K562 (cell line): ENCODE measurements at regions of chr11 and their contacts with region 1.

Region 1: DNA sequence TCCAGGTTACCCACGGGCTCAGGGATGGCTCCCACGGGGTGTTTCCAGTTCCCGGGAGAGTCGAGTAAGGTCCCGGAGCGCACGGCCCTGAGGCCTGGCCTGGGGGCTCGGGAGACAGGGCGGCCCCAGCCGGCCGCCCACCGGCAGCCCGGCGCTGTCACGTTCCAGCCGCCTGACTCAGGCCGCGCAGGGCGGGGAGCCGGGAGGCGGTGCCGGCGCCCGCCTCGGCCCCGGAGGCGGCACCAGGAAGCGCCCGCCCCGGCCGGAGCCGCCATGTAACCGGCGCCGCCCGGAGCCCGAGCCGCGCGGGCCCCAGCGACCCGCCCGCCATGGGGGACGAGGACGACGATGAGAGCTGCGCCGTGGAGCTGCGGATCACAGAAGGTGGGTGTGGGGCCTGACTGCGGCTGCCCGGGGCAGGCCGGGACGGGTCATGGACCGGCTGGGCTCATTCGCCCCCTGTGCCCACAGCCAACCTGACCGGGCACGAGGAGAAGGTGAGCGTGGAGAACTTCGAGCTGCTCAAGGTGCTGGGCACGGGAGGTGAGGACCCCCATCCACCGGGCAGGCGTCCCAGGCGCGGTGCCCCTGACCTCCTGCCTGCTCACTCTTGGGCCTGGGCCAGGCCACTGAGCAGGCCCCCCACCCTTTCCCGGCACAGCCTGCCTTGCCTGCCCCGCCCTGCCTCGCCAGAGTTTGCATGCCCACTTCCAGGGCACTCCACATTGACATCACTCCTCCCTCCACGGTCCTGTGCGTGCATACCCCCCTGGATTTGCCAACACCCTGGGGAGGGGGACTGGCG is at the start of gene RPS6KA4:
- DNase-seq: peak; percentile 80 to 92 (median 90)
- ATAC-seq: peak; percentile 85
- H3K4me3 ChIP-seq: peak within 1 kb of the TSS; percentile 81
- H3K27ac ChIP-seq: peak within 1 kb of the TSS; percentile 91
- H3K4me1 ChIP-seq: peaks cover 34 to 62% of the 10 kb centered on the region in 2 experiments
- H3K27me3 ChIP-seq: no peaks in the 10 kb centered on the region
- CTCF ChIP-seq: no peak
- EP300 ChIP-seq: no peak
- POLR2A ChIP-seq: peak; percentile 71
- RAD21 ChIP-seq: no peak
- polyA plus RNA-seq, gene RPS6KA4: 0.15 to 0.27 TPM

Region 2: DNA sequence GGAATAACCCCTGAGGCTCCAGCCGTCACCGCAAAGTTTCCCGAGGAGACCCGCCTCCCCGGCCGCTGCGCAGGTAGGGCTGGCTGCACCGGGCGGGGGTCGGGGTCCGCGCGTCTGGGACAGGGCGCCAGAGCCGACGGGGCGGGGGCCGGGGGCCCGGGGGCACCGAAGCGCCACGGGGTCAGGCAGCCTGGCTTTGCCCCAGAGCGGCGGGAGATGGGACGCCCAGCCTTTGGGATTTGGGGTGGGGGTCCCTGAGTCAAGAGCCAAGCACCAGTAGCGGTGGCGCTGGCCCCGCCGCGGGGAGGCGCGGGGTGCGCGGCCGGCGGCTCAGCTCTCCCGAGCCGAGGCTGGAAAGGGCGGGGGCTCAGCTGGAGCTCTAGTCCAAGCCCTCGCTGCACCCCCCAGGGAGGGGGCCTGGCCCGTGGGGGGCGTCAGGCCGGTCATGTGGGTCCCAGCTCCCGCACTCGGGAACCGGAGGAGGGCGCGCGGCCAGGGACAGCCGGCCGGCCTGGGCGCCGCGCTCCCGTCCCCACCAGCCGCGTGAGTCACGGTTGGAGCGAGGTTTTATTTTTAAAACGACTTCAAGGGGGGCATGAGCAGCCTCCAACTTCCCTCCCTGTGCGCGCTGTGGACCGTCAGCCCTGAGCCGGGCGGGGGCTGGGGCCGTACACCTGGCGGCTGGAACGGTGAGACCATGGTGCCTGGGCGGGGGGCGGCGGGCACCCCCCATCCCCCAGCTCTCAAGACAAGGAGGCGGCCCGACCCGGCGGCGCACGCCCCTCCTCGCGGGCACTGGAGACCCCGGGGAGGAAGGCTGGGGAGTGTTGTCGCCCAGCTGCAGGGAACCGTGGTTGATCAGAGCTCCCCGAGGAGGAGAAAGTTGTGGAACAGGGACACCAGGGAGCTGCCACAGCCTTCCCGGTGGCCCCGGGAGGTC is 322.8 kb before region 1 on chr11:
- CTCF ChIA-PET with region 1: no interaction called
- POLR2A ChIA-PET with region 1: no interaction called
- in situ Hi-C with region 1: no loop called
- intact Hi-C with region 1: no loop called
- DNase-seq: peak in 3 of 4 experiments; percentile 40 to 53 (median 47)
- ATAC-seq: peak; percentile 51
- H3K4me3 ChIP-seq: no peak overlapping the region; the same call in 1 of the 2 replicates
- H3K27ac ChIP-seq: no peak overlapping the region
- H3K4me1 ChIP-seq: peaks cover 0 to 40% of the 10 kb centered on the region in 2 experiments; a peak in 2 of 5 replicates
- H3K27me3 ChIP-seq: peaks cover 5 to 12% of the 10 kb centered on the region in 2 experiments; a peak in 2 of 5 replicates
- CTCF ChIP-seq: no peak
- EP300 ChIP-seq: no peak
- POLR2A ChIP-seq: no peak
- RAD21 ChIP-seq: no peak

Region 3: DNA sequence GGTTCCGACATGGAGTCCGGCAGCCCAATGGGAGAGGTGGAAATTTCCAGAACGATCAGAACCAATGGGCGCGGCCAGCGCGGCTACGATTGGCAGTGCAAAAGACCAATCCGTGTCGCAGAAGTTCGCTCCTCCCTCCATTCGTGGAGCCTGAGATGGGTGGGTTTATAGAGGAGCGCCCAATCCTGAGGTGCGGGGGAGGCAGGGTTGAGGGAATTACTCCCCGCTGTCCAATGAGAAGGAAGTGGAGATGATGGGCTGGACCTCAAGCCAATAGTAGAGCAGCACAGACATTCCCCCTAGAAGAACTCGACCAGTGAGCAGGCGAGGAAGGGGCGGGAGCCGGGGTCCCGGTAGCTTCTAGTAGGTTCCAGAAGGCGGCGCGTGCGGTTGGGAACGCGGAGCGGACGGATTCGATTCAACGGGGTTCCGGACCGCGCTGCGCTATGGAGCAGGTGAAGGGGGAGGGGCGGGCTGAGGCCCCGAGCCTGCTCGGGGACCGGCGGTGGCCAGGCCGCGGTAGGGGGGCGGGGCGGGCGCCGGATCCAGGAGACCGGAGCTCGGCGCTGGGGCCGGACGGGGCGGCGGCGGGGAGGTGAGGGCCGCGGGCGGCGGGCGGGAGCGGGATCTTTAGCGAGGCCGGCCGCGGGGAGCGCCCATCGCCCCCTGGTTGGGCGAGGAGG is 173.2 kb before region 1 on chr11 and contains the start of gene STIP1:
- CTCF ChIA-PET with region 1: no interaction called
- POLR2A ChIA-PET with region 1: interaction called, 3 read pairs
- in situ Hi-C with region 1: no loop called
- intact Hi-C with region 1: loop called (anchors 5 kb)
- DNase-seq: peak; percentile 91 to 99 (median 96)
- ATAC-seq: peak; percentile 89
- H3K4me3 ChIP-seq: peak within 1 kb of the TSS; percentile 70
- H3K27ac ChIP-seq: peak within 1 kb of the TSS; percentile 89
- H3K4me1 ChIP-seq: peaks cover 25 to 50% of the 10 kb centered on the region in 2 experiments
- H3K27me3 ChIP-seq: no peaks in the 10 kb centered on the region
- CTCF ChIP-seq: peak; percentile 58 to 70 (median 64); a peak in 5 of 6 replicates
- EP300 ChIP-seq: peak; percentile 59; the same call in 1 of the 2 replicates
- POLR2A ChIP-seq: no peak
- RAD21 ChIP-seq: no peak
- polyA plus RNA-seq, gene STIP1: 58.1 to 122 TPM

Region 4: DNA sequence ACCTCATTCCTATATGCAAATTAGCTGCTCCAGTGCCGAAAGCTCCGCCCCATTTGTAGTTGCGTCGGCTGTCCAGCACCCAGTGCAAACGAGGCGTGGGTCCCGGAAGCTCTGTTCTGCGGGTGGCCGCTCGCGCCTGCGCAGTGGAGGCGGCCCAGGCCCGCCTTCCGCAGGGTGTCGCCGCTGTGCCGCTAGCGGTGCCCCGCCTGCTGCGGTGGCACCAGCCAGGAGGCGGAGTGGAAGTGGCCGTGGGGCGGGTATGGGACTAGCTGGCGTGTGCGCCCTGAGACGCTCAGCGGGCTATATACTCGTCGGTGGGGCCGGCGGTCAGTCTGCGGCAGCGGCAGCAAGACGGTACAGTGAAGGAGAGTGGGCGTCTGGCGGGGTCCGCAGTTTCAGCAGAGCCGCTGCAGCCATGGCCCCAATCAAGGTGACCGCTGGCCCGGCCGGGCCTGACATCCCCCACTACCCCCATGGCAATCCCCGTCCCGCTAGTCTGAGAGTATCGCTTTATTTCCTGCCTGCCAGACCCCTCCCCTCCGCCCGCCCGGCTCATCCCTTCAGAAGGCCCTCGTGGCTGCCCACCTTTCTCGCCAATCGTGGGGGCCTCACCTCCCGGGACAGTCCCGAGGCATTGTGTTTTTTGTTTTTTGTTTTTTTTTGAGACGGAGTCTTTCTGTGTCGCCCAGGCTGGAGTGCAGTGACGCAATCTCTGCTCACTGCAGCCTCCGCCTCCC is 41.0 kb before region 1 on chr11 and contains the start of gene PRDX5:
- CTCF ChIA-PET with region 1: interaction called, 19 read pairs
- POLR2A ChIA-PET with region 1: interaction called, 12 read pairs
- in situ Hi-C with region 1: no loop called
- intact Hi-C with region 1: loop called (anchors 1 kb)
- DNase-seq: peak; percentile 94 to 97 (median 96)
- ATAC-seq: peak; percentile 85
- H3K4me3 ChIP-seq: peak within 1 kb of the TSS; percentile 94
- H3K27ac ChIP-seq: peak within 1 kb of the TSS; percentile 99
- H3K4me1 ChIP-seq: peaks cover 9 to 66% of the 10 kb centered on the region in 2 experiments; a peak in 4 of 5 replicates
- H3K27me3 ChIP-seq: no peaks in the 10 kb centered on the region
- CTCF ChIP-seq: peak; percentile 65 to 96 (median 94)
- EP300 ChIP-seq: no peak
- POLR2A ChIP-seq: peak; percentile 70
- RAD21 ChIP-seq: peak; percentile 90 to 91
- polyA plus RNA-seq, gene PRDX5: 40.8 to 64.2 TPM

Region 5: GRCh38 chr11:64341851-64342791 is 17.0 kb before region 1 on chr11:
- CTCF ChIA-PET with region 1: interaction called, 4 read pairs
- POLR2A ChIA-PET with region 1: interaction called, 20 read pairs
- in situ Hi-C with region 1: no loop called
- intact Hi-C with region 1: no loop called
- DNase-seq: peak; percentile 95 to 97 (median 96)
- ATAC-seq: peak; percentile 95
- H3K4me3 ChIP-seq: peak overlapping the region; percentile 39
- H3K27ac ChIP-seq: peak overlapping the region; percentile 54
- H3K4me1 ChIP-seq: peaks cover 26 to 54% of the 10 kb centered on the region in 2 experiments; a peak in 4 of 5 replicates
- H3K27me3 ChIP-seq: no peaks in the 10 kb centered on the region
- CTCF ChIP-seq: peak; percentile 57 to 96 (median 75)
- EP300 ChIP-seq: no peak
- POLR2A ChIP-seq: peak; percentile 66
- RAD21 ChIP-seq: peak; percentile 42 to 67

Region 6: GRCh38 chr11:64428693-64429092 is 69.6 kb after region 1 on chr11:
- CTCF ChIA-PET with region 1: no interaction called
- POLR2A ChIA-PET with region 1: no interaction called
- in situ Hi-C with region 1: no loop called
- intact Hi-C with region 1: loop called (anchors 5 kb)
- DNase-seq: no peak
- ATAC-seq: no peak
- H3K4me3 ChIP-seq: no peak overlapping the region
- H3K27ac ChIP-seq: no peak overlapping the region
- H3K4me1 ChIP-seq: no peaks in the 10 kb centered on the region
- H3K27me3 ChIP-seq: peaks cover 51 to 65% of the 10 kb centered on the region in 2 experiments
- CTCF ChIP-seq: no peak
- EP300 ChIP-seq: no peak
- POLR2A ChIP-seq: no peak
- RAD21 ChIP-seq: no peak

Region 7: GRCh38 chr11:64489831-64490441 is 130.8 kb after region 1 on chr11:
- CTCF ChIA-PET with region 1: no interaction called
- POLR2A ChIA-PET with region 1: no interaction called
- in situ Hi-C with region 1: no loop called
- intact Hi-C with region 1: loop called (anchors 5 kb)
- DNase-seq: peak; percentile 77 to 80 (median 78)
- ATAC-seq: peak; percentile 99
- H3K4me3 ChIP-seq: no peak overlapping the region
- H3K27ac ChIP-seq: no peak overlapping the region
- H3K4me1 ChIP-seq: peaks cover 0 to 13% of the 10 kb centered on the region in 2 experiments; a peak in 3 of 5 replicates
- H3K27me3 ChIP-seq: peaks cover 15 to 44% of the 10 kb centered on the region in 2 experiments; a peak in 4 of 5 replicates
- CTCF ChIP-seq: peak; percentile 88 to 97 (median 94)
- EP300 ChIP-seq: no peak
- POLR2A ChIP-seq: no peak
- RAD21 ChIP-seq: peak; percentile 76 to 95

Region 8: GRCh38 chr11:64659417-64660144 is 300.5 kb after region 1 on chr11:
- CTCF ChIA-PET with region 1: no interaction called
- POLR2A ChIA-PET with region 1: no interaction called
- in situ Hi-C with region 1: loop called (anchors 5 kb)
- intact Hi-C with region 1: no loop called
- DNase-seq: peak; percentile 73 to 87 (median 79)
- ATAC-seq: peak; percentile 88
- H3K4me3 ChIP-seq: no peak overlapping the region
- H3K27ac ChIP-seq: peak overlapping the region; percentile 82
- H3K4me1 ChIP-seq: peaks cover 38 to 42% of the 10 kb centered on the region in 2 experiments
- H3K27me3 ChIP-seq: no peaks in the 10 kb centered on the region
- CTCF ChIP-seq: peak in 2 of 3 experiments; percentile 37 to 54; a peak in 3 of 6 replicates
- EP300 ChIP-seq: peak; percentile 79
- POLR2A ChIP-seq: peak; percentile 60; the same call in 1 of the 2 replicates
- RAD21 ChIP-seq: peak; percentile 20 to 61; a peak in 3 of 4 replicates